H1 (cell line): ENCODE measurements at regions of chr7 and their contacts with region 1.

Region 1: DNA sequence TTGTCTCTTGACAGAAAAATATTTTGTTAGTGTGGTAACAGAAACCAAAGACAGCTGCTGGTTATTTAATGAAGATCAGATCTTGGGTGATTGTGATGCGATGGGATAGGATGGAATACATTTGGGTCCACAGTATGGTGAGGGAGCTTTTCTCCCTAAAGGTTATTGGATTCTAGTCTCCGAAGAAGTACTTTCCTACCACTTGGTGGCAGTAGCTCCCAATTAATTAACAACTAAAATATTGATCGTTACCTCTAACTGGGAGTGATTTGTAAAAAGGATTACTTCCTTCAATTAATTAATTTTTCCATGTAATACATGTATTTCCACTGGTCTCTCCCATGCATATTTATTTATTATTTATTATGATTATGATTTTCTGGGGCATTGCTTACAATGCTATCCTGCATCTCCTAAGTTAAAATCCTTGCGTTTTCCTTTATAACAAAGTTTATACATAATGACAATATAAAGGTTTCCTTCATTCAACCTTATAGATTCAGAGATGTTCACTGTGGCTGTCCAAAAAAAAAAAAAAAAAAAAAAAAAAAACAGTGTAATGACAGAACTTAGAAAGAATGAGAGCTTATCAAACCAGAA is 25.6 kb downstream of the TMEM196 start:
- DNase-seq: no peak
- H3K4me3 ChIP-seq: no peak overlapping the region
- H3K27ac ChIP-seq: no peak overlapping the region
- H3K4me1 ChIP-seq: no peaks in the 10 kb centered on the region
- H3K27me3 ChIP-seq: no peaks in the 10 kb centered on the region
- CTCF ChIP-seq: peak in 2 of 3 experiments; percentile 45 to 61; a peak in 2 of 4 replicates
- EP300 ChIP-seq: no peak
- POLR2A ChIP-seq: no peak
- RAD21 ChIP-seq: peak; percentile 74 to 77

Region 2: DNA sequence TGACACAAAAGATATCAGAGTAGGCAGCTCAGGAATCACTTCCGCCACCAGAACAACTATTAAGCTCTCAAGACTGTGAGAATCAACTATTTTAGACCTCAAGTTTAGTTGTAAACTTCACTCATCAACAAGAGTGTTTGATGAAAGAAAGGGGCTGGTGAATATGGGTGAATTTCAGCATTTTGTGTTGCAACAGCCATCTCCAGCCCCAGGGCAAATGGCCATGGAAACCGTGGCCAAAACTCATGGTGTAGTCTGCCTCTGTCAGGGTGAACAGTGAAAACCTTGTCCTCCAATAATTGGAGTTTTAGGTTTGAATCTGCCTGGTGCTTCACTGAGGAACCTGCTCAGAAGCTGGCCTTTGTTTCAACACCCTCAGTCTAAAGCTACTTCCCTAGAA is 99.0 kb before region 1 on chr7:
- CTCF ChIA-PET with region 1: no interaction called
- POLR2A ChIA-PET with region 1: no interaction called
- DNase-seq: no peak
- H3K4me3 ChIP-seq: no peak overlapping the region
- H3K27ac ChIP-seq: no peak overlapping the region
- H3K4me1 ChIP-seq: no peaks in the 10 kb centered on the region; a peak in 1 of 7 replicates
- H3K27me3 ChIP-seq: no peaks in the 10 kb centered on the region
- CTCF ChIP-seq: no peak
- EP300 ChIP-seq: no peak
- POLR2A ChIP-seq: no peak
- RAD21 ChIP-seq: no peak

Region 3: GRCh38 chr7:19713676-19714075 is 34.2 kb before region 1 on chr7:
- CTCF ChIA-PET with region 1: interaction called, 26 read pairs
- POLR2A ChIA-PET with region 1: no interaction called
- DNase-seq: no peak
- H3K4me3 ChIP-seq: no peak overlapping the region
- H3K27ac ChIP-seq: no peak overlapping the region
- H3K4me1 ChIP-seq: no peaks in the 10 kb centered on the region
- H3K27me3 ChIP-seq: no peaks in the 10 kb centered on the region
- CTCF ChIP-seq: peak in 2 of 3 experiments; percentile 24 to 48; a peak in 2 of 4 replicates
- EP300 ChIP-seq: no peak
- POLR2A ChIP-seq: no peak
- RAD21 ChIP-seq: peak; percentile 61 to 62

Region 4: GRCh38 chr7:20199015-20199737 is 451.3 kb after region 1 on chr7:
- CTCF ChIA-PET with region 1: interaction called, 15 read pairs
- POLR2A ChIA-PET with region 1: no interaction called
- DNase-seq: no peak
- H3K4me3 ChIP-seq: no peak overlapping the region
- H3K27ac ChIP-seq: no peak overlapping the region
- H3K4me1 ChIP-seq: peaks cover 0 to 6% (median 6%) of the 10 kb centered on the region in 4 experiments; a peak in 4 of 7 replicates
- H3K27me3 ChIP-seq: no peaks in the 10 kb centered on the region
- CTCF ChIP-seq: no peak
- EP300 ChIP-seq: no peak
- POLR2A ChIP-seq: no peak
- RAD21 ChIP-seq: no peak